ENCODE measurements at regions of chr7 and their contacts with region 1.

Region 1: GRCh38 chr7:155298834-155299534 is 1.3 kb downstream of the INSIG1 start:
- DNase-seq: peak; percentile 98
- ATAC-seq: peak; percentile 72
- H3K4me3 ChIP-seq: peak overlapping the region; percentile 58 to 91 (median 79)
- H3K4me3 Mint-ChIP-seq: peak overlapping the region; percentile 94
- H3K27ac ChIP-seq: peak overlapping the region; percentile 88 to 98
- H3K27ac Mint-ChIP-seq: peak overlapping the region; percentile 97
- H3K4me1 ChIP-seq: peaks cover 26 to 34% of the 10 kb centered on the region in 2 donors
- H3K4me1 Mint-ChIP-seq: peaks cover 38% of the 10 kb centered on the region
- H3K27me3 ChIP-seq: no peaks in the 10 kb centered on the region
- H3K27me3 Mint-ChIP-seq: no peaks in the 10 kb centered on the region
- CTCF ChIP-seq: no peak

Region 2: DNA sequence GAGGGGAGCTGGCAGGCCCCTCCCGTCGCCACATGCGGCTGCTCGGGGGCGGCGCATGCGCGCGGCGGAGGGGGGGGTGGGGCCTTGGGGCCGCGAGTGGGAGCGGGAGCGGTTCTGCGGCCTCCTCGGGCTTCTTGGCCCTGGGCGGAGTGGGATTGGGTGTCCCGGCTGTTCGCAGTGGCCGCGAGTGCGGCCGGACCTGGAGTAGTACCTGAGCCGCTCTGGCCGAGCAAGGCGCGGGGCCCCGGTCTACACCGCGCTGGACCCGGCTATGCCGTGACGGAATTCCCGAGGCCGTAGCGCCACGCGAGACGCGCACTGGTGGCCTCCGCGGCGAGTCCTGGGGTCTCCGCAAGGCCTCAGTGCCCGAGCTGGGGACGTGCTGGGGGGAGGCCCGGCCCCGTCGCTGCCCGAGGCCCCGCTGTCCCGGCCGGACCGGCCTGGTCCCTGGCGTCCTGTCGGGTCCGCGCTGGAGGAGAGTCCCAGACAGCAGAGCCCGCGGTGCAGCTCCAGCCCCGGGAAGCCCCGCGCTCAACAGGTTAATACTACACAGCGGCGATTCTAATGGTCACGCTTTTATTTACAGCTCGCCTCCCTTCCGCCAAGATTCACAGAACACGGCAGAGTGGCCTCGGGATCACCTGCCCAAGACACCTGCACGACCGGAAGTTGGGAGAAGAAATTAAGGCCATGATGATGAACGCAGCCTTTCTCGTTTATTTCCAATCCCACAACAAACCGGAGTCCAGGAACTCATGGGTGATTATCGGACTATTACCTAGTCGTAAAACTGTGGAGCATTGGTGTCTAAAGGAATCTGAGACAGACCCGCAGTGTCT is 295.4 kb before region 1 on chr7:
- CTCF ChIA-PET with region 1: interaction called, 7 read pairs
- POLR2A ChIA-PET with region 1: interaction called, 9 read pairs
- intact Hi-C with region 1: loop called (anchors 1 kb)
- DNase-seq: no peak
- ATAC-seq: peak; percentile 86
- H3K4me3 ChIP-seq: peak overlapping the region; percentile 57 to 98 (median 89)
- H3K4me3 Mint-ChIP-seq: peak overlapping the region; percentile 95
- H3K27ac ChIP-seq: peak overlapping the region; percentile 58 to 80
- H3K27ac Mint-ChIP-seq: peak overlapping the region; percentile 93
- H3K4me1 ChIP-seq: peaks cover 14 to 18% of the 10 kb centered on the region in 2 donors
- H3K4me1 Mint-ChIP-seq: peaks cover 15% of the 10 kb centered on the region
- H3K27me3 ChIP-seq: no peaks in the 10 kb centered on the region
- H3K27me3 Mint-ChIP-seq: no peaks in the 10 kb centered on the region
- CTCF ChIP-seq: no peak

Region 3: GRCh38 chr7:155205368-155206317 is 93.3 kb before region 1 on chr7:
- CTCF ChIA-PET with region 1: interaction called, 9 read pairs
- POLR2A ChIA-PET with region 1: interaction called, 11 read pairs
- intact Hi-C with region 1: loop called (anchors 1 kb)
- DNase-seq: peak; percentile 91
- ATAC-seq: peak; percentile 84
- H3K4me3 ChIP-seq: peak overlapping the region; percentile 33 to 61 (median 55)
- H3K4me3 Mint-ChIP-seq: peak overlapping the region; percentile 88
- H3K27ac ChIP-seq: peak overlapping the region; percentile 42 to 87
- H3K27ac Mint-ChIP-seq: peak overlapping the region; percentile 89
- H3K4me1 ChIP-seq: peaks cover 19 to 23% of the 10 kb centered on the region in 2 donors
- H3K4me1 Mint-ChIP-seq: peaks cover 20% of the 10 kb centered on the region
- H3K27me3 ChIP-seq: no peaks in the 10 kb centered on the region
- H3K27me3 Mint-ChIP-seq: no peaks in the 10 kb centered on the region
- CTCF ChIP-seq: no peak

Region 4: GRCh38 chr7:155316421-155317113 is 17.6 kb after region 1 on chr7:
- CTCF ChIA-PET with region 1: no interaction called
- POLR2A ChIA-PET with region 1: no interaction called
- intact Hi-C with region 1: no loop called
- DNase-seq: no peak
- ATAC-seq: no peak
- H3K4me3 ChIP-seq: no peak overlapping the region
- H3K4me3 Mint-ChIP-seq: no peak overlapping the region
- H3K27ac ChIP-seq: no peak overlapping the region
- H3K27ac Mint-ChIP-seq: no peak overlapping the region
- H3K4me1 ChIP-seq: no peaks in the 10 kb centered on the region
- H3K4me1 Mint-ChIP-seq: no peaks in the 10 kb centered on the region
- H3K27me3 ChIP-seq: peaks cover 0 to 5% (median 0%) of the 10 kb centered on the region in 4 experiments
- H3K27me3 Mint-ChIP-seq: peaks cover 7% of the 10 kb centered on the region
- CTCF ChIP-seq: no peak

Region 5: DNA sequence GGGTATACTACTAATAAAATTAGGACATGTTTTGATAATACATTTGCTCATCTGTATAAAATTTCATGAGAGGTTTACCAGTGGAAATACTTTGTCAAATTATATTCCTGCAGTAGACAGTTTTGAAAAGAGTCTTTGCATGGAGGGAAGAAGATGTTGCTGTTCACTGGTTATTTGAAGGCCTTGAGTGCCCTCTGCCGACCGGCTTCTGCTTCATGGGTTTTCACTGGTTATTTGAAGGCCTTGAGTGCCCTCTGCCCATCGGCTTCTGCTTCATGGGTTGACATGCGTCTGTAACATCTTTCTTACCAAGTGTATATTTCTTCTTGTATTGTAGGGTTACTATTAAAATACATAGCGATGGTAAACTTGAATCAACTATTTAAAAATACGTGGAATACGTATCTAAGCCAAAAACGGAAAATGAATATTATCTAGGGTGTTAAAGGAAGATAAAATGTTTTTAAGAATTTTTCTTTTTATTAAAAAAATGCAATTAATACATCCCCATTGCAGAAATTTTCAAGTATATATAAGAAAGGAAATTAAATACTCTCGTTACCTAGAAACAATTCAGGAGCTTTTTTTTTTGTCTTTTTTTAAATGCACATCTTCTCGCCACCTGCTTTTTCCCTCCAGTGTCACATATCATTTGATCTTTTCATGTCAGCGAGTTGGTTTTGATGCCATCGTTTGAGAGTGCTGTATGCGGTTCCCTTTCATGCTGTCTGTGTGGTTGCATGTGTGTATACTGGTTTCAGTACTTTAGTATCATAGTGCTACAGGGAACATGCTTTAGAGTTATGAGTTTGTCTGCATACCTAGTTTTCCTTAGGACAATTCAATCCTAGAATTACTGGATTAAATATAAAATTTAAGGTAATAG is 439.9 kb after region 1 on chr7:
- CTCF ChIA-PET with region 1: no interaction called
- POLR2A ChIA-PET with region 1: no interaction called
- intact Hi-C with region 1: loop called (anchors 5 kb)
- DNase-seq: peak; percentile 81
- ATAC-seq: peak; percentile 36
- H3K4me3 ChIP-seq: no peak overlapping the region
- H3K4me3 Mint-ChIP-seq: no peak overlapping the region
- H3K27ac ChIP-seq: no peak overlapping the region
- H3K27ac Mint-ChIP-seq: peak overlapping the region; percentile 7
- H3K4me1 ChIP-seq: peaks cover 3 to 7% of the 10 kb centered on the region in 2 donors
- H3K4me1 Mint-ChIP-seq: peaks cover 44% of the 10 kb centered on the region
- H3K27me3 ChIP-seq: no peaks in the 10 kb centered on the region
- H3K27me3 Mint-ChIP-seq: no peaks in the 10 kb centered on the region
- CTCF ChIP-seq: peak; percentile 81

Region 6: DNA sequence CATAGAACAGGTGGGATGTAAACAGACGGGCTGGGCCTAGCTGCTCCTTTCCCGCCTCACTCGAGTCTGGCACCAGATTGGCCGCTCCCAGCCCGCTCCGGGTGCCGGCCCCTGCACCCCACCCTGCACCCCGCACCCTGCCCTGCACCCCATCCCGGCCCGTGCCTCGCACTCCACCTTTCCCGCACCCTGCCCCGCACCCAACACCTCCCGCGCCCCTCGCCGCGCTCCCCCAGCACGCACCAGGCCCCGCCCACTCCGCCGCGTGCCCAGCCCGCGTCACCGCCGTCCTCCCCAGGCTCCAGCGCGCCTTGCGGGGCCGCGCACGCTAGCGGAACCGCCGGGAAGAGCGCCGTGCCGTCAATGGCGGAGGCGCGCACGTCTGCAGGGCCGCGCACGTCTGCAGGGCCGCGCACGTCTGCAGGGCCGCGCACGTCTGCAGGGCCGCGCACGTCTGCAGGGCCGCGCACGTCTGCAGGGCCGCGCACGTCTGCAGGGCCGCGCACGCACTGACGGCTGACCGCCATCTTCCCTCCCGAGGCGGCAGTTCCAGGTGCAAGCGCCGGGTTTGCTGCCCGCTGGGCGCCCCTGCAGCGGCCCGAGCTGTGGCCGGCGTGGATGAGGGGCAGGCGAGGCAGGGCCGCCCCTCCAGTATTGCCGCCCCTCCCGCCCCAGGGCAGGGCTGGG is 1839.6 kb after region 1 on chr7 and contains the start of gene UBE3C:
- CTCF ChIA-PET with region 1: no interaction called
- POLR2A ChIA-PET with region 1: no interaction called
- intact Hi-C with region 1: loop called (anchors 5 kb)
- DNase-seq: peak; percentile 96
- ATAC-seq: peak; percentile 85
- H3K4me3 ChIP-seq: peak within 1 kb of the TSS; percentile 36 to 88 (median 67)
- H3K4me3 Mint-ChIP-seq: peak within 1 kb of the TSS; percentile 85
- H3K27ac ChIP-seq: peak within 1 kb of the TSS; percentile 80 to 90
- H3K27ac Mint-ChIP-seq: peak within 1 kb of the TSS; percentile 95
- H3K4me1 ChIP-seq: peaks cover 19 to 29% of the 10 kb centered on the region in 2 donors
- H3K4me1 Mint-ChIP-seq: peaks cover 37% of the 10 kb centered on the region
- H3K27me3 ChIP-seq: no peaks in the 10 kb centered on the region
- H3K27me3 Mint-ChIP-seq: no peaks in the 10 kb centered on the region
- CTCF ChIP-seq: no peak
- total RNA-seq, gene UBE3C: 64.2 and 66.5 TPM in 2 replicates

Measured in B cell (primary cell).